ENCODE measurements at regions of chr16 and their contacts with region 1.

Region 1: GRCh38 chr16:57300387-57301125 is 16.1 kb upstream of the PLLP start:
- ATAC-seq: peak; percentile 77 to 89 (median 86)
- H3K4me3 ChIP-seq: peak overlapping the region; percentile 43 to 69 (median 56)
- H3K27ac ChIP-seq: peak overlapping the region; percentile 43 to 58
- H3K4me1 ChIP-seq: peaks cover 0 to 4% of the 10 kb centered on the region in 2 donors

Region 2: DNA sequence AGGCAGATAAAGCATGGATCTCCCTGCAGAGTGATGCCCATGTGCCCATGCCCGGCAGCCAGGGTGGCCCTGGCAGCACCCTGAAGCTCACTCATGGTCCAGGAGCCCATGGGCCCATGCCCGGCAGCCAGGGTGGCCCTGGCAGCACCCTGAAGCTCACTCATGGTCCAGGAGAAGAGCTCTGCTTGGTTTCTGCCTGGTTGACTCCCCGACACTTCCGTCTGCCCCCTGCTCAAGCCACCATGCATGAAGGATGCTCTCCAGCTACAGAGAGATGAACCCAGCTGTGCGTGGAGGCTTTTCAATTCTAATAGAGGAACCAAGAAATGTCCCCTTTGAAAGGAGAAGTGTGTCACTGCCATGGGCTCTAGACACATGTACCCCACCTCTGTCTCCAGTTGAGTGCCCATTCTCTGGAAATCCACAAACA is 112.8 kb after region 1 on chr16:
- in situ Hi-C with region 1: loop called in 8 of 9 experiments (anchors 5 to 25 kb)
- ATAC-seq: no peak
- H3K4me3 ChIP-seq: no peak overlapping the region
- H3K27ac ChIP-seq: no peak overlapping the region
- H3K4me1 ChIP-seq: peaks cover 15 to 28% of the 10 kb centered on the region in 2 donors

Region 3: GRCh38 chr16:57422026-57422944 is 121.7 kb after region 1 on chr16:
- in situ Hi-C with region 1: loop called (anchors 5 to 25 kb)
- ATAC-seq: peak; percentile 43 to 88 (median 72)
- H3K4me3 ChIP-seq: no peak overlapping the region
- H3K27ac ChIP-seq: peak overlapping the region in 1 of 2 donors; percentile 1
- H3K4me1 ChIP-seq: peaks cover 15 to 19% of the 10 kb centered on the region in 2 donors

Region 4: DNA sequence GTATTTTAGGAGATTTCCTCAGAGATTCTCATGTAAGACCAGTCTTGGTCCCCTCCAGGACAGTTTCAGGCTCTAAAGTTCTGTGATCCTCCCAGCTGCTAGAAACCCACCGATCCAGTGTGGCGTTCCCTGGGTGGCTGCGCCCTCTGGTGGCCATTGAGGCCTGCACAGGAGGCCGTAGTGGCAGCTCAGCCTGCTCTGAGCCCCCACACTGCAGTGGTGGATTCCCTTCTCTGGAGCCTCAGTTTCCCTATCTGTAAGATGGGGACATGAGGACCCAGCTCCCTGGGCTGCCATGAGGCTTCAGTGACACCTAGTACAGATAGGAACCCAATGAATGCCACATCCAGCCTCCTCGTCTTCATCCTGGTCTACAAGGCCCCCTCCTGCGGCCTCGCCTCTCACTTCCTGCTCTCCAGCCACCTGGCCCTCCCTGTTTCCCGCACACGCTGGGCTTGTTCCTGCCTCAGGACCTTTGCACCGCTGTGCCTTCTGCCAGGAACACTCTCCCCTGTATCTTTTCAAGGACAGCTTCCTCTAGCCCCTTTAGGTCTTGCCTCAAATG is 219.3 kb after region 1 on chr16:
- in situ Hi-C with region 1: loop called in 2 of 9 experiments (anchors 25 kb)
- ATAC-seq: peak; percentile 74 to 98 (median 92)
- H3K4me3 ChIP-seq: no peak overlapping the region
- H3K27ac ChIP-seq: no peak overlapping the region
- H3K4me1 ChIP-seq: no peaks in the 10 kb centered on the region